CD8-positive, alpha-beta memory T cell (primary cell): ENCODE measurements at regions of chr9 and their contacts with region 1.

Region 1: DNA sequence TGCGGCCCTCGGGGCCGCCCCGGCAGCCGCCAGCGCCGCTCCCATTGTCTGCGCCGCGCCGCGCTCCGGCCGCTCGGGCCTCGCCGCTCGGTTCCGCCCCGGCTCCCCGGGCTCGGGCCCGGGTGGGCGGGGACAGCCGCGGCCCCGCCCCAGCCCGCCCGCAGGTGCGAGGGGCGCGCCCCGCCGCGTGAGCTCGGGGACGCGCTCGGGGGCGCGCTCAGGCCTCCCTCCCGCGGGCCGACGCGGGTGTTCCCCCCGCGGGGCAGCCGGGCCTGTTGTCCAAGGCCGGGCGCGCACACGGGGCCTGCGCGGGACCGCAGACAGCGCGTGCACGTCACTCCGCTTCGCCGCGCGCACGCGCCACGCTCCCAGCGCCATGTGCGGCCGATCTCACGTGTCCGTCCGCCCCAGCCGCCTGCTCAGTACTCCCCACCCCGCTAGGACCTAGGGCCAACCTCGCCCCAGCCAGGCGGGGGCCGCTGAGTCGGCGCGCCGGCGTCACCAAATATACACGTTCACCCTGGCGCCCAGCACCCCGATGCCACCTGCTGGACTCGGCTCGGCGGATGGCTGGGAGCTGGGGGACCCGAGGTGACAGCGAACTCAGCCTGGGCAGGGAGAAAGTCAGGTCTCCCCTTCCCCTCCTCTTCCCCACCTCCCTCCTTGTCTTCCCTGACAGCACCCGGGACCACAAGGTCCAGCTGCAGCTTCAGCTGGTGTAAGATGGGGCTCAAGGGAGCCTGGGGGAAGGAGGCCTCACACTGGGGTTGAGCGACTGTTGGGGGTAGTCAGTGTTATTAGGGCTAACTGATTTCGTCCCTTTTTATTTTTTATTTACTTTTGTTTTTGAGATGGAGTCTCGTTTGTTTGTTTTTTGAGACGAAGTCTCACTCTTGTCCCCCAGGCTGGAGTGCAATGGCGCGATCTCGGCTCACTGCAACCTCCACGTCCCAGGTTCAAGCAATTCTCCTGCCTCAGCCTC is 14.3 kb downstream of the GBGT1 start:
- DNase-seq: peak; percentile 74 to 89 (median 78)
- H3K4me3 ChIP-seq: peak overlapping the region; percentile 56
- H3K4me3 Mint-ChIP-seq: peak overlapping the region; percentile 64 to 90 (median 79)
- H3K27ac ChIP-seq: peak overlapping the region; percentile 69
- H3K27ac Mint-ChIP-seq: peak overlapping the region; percentile 75 to 92 (median 84)
- H3K4me1 ChIP-seq: peaks cover 32% of the 10 kb centered on the region
- H3K4me1 Mint-ChIP-seq: peaks cover 32 to 42% (median 34%) of the 10 kb centered on the region in 3 donors
- H3K27me3 ChIP-seq: no peaks in the 10 kb centered on the region
- H3K27me3 Mint-ChIP-seq: no peaks in the 10 kb centered on the region

Region 2: GRCh38 chr9:133023117-133023890 is 126.1 kb before region 1 on chr9:
- CTCF ChIA-PET with region 1: interaction called, 20 read pairs
- POLR2A ChIA-PET with region 1: no interaction called
- DNase-seq: peak in 2 of 5 donors; percentile 18 to 58
- H3K4me3 ChIP-seq: no peak overlapping the region
- H3K4me3 Mint-ChIP-seq: no peak overlapping the region
- H3K27ac ChIP-seq: no peak overlapping the region
- H3K27ac Mint-ChIP-seq: no peak overlapping the region
- H3K4me1 ChIP-seq: no peaks in the 10 kb centered on the region
- H3K4me1 Mint-ChIP-seq: peaks cover 10 to 17% (median 11%) of the 10 kb centered on the region in 3 donors
- H3K27me3 ChIP-seq: no peaks in the 10 kb centered on the region
- H3K27me3 Mint-ChIP-seq: peaks cover 0 to 5% of the 10 kb centered on the region in 2 donors

Region 3: GRCh38 chr9:133030317-133031129 is 118.9 kb before region 1 on chr9 and contains the start of gene GTF3C5:
- CTCF ChIA-PET with region 1: interaction called, 33 read pairs
- POLR2A ChIA-PET with region 1: interaction called, 20 read pairs
- DNase-seq: peak; percentile 88 to 95 (median 94)
- H3K4me3 ChIP-seq: peak within 1 kb of the TSS; percentile 72
- H3K4me3 Mint-ChIP-seq: peak within 1 kb of the TSS; percentile 94 to 99 (median 96)
- H3K27ac ChIP-seq: peak within 1 kb of the TSS; percentile 87
- H3K27ac Mint-ChIP-seq: peak within 1 kb of the TSS; percentile 95 to 100 (median 97)
- H3K4me1 ChIP-seq: peaks cover 26% of the 10 kb centered on the region
- H3K4me1 Mint-ChIP-seq: peaks cover 49 to 76% (median 59%) of the 10 kb centered on the region in 3 donors
- H3K27me3 ChIP-seq: no peaks in the 10 kb centered on the region
- H3K27me3 Mint-ChIP-seq: peaks cover 0 to 1% of the 10 kb centered on the region in 2 donors
- total RNA-seq, gene GTF3C5: 87.8 to 91.8 TPM

Region 4: GRCh38 chr9:133041958-133042357 is 107.5 kb before region 1 on chr9:
- CTCF ChIA-PET with region 1: interaction called, 11 read pairs
- POLR2A ChIA-PET with region 1: no interaction called
- DNase-seq: no peak
- H3K4me3 ChIP-seq: no peak overlapping the region
- H3K4me3 Mint-ChIP-seq: no peak overlapping the region
- H3K27ac ChIP-seq: no peak overlapping the region
- H3K27ac Mint-ChIP-seq: no peak overlapping the region
- H3K4me1 ChIP-seq: no peaks in the 10 kb centered on the region
- H3K4me1 Mint-ChIP-seq: peaks cover 6 to 23% (median 12%) of the 10 kb centered on the region in 3 donors
- H3K27me3 ChIP-seq: no peaks in the 10 kb centered on the region
- H3K27me3 Mint-ChIP-seq: peaks cover 0 to 1% of the 10 kb centered on the region in 2 donors

Region 5: GRCh38 chr9:133094842-133095393 is 54.5 kb before region 1 on chr9:
- CTCF ChIA-PET with region 1: interaction called, 521 read pairs
- POLR2A ChIA-PET with region 1: no interaction called
- DNase-seq: no peak
- H3K4me3 ChIP-seq: no peak overlapping the region
- H3K4me3 Mint-ChIP-seq: no peak overlapping the region
- H3K27ac ChIP-seq: no peak overlapping the region
- H3K27ac Mint-ChIP-seq: peak overlapping the region in 1 of 8 donors; percentile 7
- H3K4me1 ChIP-seq: no peaks in the 10 kb centered on the region
- H3K4me1 Mint-ChIP-seq: no peaks in the 10 kb centered on the region
- H3K27me3 ChIP-seq: no peaks in the 10 kb centered on the region
- H3K27me3 Mint-ChIP-seq: no peaks in the 10 kb centered on the region

Region 6: DNA sequence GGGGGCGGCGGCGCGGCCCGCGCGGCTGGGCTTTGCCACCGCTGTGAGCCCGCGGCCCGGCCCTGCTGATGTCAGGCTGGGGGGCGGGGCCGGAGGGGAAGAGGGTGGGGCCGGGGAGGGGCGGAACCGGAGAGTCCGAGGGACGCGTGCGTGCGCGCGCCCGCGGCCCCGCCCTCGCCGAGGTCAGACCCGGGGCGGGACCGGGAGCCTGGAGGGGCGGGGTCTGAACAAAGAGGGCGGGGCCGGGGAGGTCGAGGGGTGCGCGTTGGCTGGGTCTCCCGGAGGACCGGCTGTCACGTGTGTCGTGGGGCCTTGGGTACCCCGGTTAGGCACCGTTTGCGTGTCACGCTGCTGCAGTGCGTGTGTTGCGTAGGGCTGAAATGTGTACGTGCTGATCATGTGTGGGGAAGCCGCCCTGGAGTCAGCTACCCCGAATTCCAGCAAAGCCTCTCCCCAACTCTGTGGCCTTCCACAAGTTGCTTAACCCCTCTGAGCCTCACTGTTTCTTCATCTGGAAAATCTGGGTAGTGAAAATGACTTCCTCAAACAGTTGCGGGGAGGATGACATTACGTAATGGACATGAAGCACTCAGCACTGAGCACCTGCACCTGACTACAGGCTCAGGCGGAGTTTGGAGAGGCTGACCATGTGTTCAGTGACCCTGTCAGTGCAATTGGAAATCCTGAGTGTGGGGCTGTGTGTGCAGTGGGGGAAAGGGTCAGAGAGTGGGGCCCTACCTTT is 28.0 kb before region 1 on chr9 and contains the start of gene RALGDS:
- CTCF ChIA-PET with region 1: interaction called, 521 read pairs
- POLR2A ChIA-PET with region 1: interaction called, 8 read pairs
- DNase-seq: peak; percentile 85 to 93 (median 90)
- H3K4me3 ChIP-seq: peak within 1 kb of the TSS; percentile 53
- H3K4me3 Mint-ChIP-seq: peak within 1 kb of the TSS; percentile 54 to 88 (median 78)
- H3K27ac ChIP-seq: peak within 1 kb of the TSS; percentile 75
- H3K27ac Mint-ChIP-seq: peak within 1 kb of the TSS; percentile 95 to 100 (median 98)
- H3K4me1 ChIP-seq: peaks cover 61% of the 10 kb centered on the region
- H3K4me1 Mint-ChIP-seq: peaks cover 59 to 95% (median 64%) of the 10 kb centered on the region in 3 donors
- H3K27me3 ChIP-seq: no peaks in the 10 kb centered on the region
- H3K27me3 Mint-ChIP-seq: no peaks in the 10 kb centered on the region
- total RNA-seq, gene RALGDS: 59.1 to 67.8 TPM

Region 7: DNA sequence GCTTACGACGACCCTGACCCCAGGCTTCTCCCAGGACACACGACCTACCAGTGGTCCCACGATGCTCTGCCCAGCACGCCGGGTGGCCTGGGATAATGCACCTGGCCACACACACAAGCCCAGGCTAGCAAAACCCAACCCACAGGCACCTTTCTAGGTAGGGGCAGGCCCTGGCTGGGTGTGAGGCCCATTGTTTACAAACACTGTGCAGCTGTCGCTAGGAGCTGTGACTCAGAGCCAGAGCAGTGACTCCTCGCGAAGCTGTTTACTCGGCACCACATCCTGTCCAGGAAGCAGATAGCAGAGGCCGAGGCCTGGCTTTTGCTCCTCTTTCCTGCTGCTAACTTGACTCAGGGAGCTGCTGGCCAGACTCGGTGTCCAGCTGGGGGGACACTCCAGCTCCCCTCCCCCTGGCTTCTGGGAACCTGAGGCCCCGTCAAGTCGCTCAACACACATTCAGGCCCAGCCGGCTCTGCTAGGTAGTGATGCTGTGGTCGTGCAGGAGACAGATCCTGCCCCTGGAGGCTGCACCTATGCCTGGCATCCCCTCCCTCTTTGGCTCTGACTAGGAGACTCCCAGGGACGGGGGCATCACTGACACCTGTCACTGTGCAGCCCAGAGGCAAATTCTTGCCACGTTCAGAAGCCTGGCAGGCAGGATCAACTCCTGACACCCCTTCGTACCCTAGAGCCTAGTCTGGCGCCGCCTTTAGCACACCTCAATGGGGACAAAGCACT is 15.6 kb before region 1 on chr9:
- CTCF ChIA-PET with region 1: interaction called, 220 read pairs
- POLR2A ChIA-PET with region 1: interaction called, 67 read pairs
- DNase-seq: peak; percentile 85 to 97 (median 88)
- H3K4me3 ChIP-seq: peak overlapping the region; percentile 35
- H3K4me3 Mint-ChIP-seq: peak overlapping the region; percentile 76 to 96 (median 84)
- H3K27ac ChIP-seq: peak overlapping the region; percentile 100
- H3K27ac Mint-ChIP-seq: peak overlapping the region; percentile 100
- H3K4me1 ChIP-seq: peaks cover 88% of the 10 kb centered on the region
- H3K4me1 Mint-ChIP-seq: peaks cover 62 to 83% (median 66%) of the 10 kb centered on the region in 3 donors
- H3K27me3 ChIP-seq: no peaks in the 10 kb centered on the region
- H3K27me3 Mint-ChIP-seq: peaks cover 0 to 2% of the 10 kb centered on the region in 2 donors